ENCODE measurements at regions of chr6 and their contacts with region 1.

Region 1: GRCh38 chr6:101992286-101992685 is 598.8 kb downstream of the GRIK2 start:
- DNase-seq: no peak
- ATAC-seq: no peak
- H3K4me3 ChIP-seq: no peak overlapping the region
- H3K27ac ChIP-seq: no peak overlapping the region
- H3K4me1 ChIP-seq: no peaks in the 10 kb centered on the region
- H3K27me3 ChIP-seq: no peaks in the 10 kb centered on the region
- CTCF ChIP-seq: no peak
- POLR2A ChIP-seq: no peak

Region 2: GRCh38 chr6:101550451-101550850 is 441.8 kb before region 1 on chr6:
- intact Hi-C with region 1: no loop called
- DNase-seq: no peak
- ATAC-seq: no peak
- H3K4me3 ChIP-seq: no peak overlapping the region
- H3K27ac ChIP-seq: no peak overlapping the region
- H3K4me1 ChIP-seq: no peaks in the 10 kb centered on the region
- H3K27me3 ChIP-seq: no peaks in the 10 kb centered on the region
- CTCF ChIP-seq: no peak
- POLR2A ChIP-seq: no peak

Region 3: GRCh38 chr6:101818051-101818450 is 174.2 kb before region 1 on chr6:
- intact Hi-C with region 1: loop called in 1 of 10 experiments (anchors 10 kb)
- DNase-seq: no peak
- ATAC-seq: no peak
- H3K4me3 ChIP-seq: no peak overlapping the region
- H3K27ac ChIP-seq: no peak overlapping the region
- H3K4me1 ChIP-seq: no peaks in the 10 kb centered on the region
- H3K27me3 ChIP-seq: no peaks in the 10 kb centered on the region
- CTCF ChIP-seq: no peak
- POLR2A ChIP-seq: no peak

Region 4: DNA sequence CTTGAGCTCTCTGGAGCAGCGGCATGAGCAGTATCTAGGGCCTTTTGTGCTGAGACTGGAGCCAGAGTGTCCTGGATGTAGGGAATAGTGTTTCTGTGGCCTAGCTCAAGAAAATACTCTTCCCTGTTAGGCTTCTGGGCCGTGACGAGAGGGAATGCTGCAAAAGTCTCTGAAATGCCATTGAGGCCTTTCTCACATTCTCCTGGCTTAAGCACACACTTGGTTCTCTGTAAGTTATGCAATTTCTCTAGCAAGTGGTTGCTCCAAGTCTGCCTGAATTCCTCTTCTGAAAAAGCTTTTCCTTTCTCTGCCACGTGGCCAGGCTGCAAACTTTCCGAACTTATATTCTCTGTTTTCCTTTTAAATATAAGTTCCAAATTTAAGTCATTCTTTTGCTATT is 145.6 kb after region 1 on chr6:
- intact Hi-C with region 1: no loop called
- DNase-seq: no peak
- ATAC-seq: no peak
- H3K4me3 ChIP-seq: no peak overlapping the region
- H3K27ac ChIP-seq: no peak overlapping the region
- H3K4me1 ChIP-seq: no peaks in the 10 kb centered on the region
- H3K27me3 ChIP-seq: no peaks in the 10 kb centered on the region
- CTCF ChIP-seq: no peak
- POLR2A ChIP-seq: no peak